ENCODE measurements at regions of chr4 and their contacts with region 1.

Region 1: GRCh38 chr4:62170235-62170634 is 970.1 kb downstream of the ADGRL3 start:
- DNase-seq: no peak
- H3K4me3 ChIP-seq: no peak overlapping the region
- H3K27ac ChIP-seq: no peak overlapping the region
- H3K4me1 ChIP-seq: no peaks in the 10 kb centered on the region
- H3K27me3 ChIP-seq: no peaks in the 10 kb centered on the region
- CTCF ChIP-seq: no peak
- POLR2A ChIP-seq: no peak

Region 2: DNA sequence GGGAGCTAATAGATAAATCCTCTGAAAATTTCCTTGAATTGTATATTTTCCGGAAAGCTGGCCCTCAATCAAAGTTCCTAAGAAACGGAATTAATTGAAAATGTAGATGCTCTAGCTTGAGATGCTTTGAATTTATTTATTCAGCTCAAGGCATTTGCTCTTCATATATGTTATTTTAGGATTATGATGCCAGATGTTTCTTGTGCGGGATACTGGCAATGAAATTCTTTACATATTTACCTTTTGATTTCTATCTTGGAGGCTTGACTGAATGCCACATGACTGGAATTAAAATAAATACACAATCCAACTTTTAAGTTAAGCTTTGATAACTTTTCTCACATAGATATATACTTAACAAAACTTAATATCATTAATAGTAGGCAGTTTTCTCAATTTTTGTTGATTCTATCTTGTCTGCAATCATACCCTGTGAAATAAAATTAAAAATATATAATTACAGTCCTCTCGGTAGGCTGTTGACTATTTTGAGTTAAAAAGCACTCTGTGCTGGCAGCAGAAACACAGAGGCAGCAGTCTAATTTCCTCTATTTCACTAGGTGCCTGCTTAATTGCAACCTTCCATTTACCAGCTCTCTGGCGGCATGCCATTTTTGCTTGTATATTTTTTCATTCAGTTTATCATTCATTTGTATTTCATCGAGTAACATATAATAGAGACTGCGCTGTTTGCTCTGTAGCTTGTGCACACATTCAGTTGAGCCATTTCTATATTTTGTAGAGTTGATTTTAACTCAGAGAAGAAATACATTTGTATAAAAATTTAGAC is 21.4 kb after region 1 on chr4:
- intact Hi-C with region 1: no loop called
- DNase-seq: no peak
- H3K4me3 ChIP-seq: no peak overlapping the region
- H3K27ac ChIP-seq: no peak overlapping the region
- H3K4me1 ChIP-seq: no peaks in the 10 kb centered on the region
- H3K27me3 ChIP-seq: no peaks in the 10 kb centered on the region
- CTCF ChIP-seq: no peak
- POLR2A ChIP-seq: no peak

Region 3: GRCh38 chr4:62250100-62250499 is 79.9 kb after region 1 on chr4:
- intact Hi-C with region 1: loop called (anchors 5 kb)
- DNase-seq: no peak
- H3K4me3 ChIP-seq: no peak overlapping the region
- H3K27ac ChIP-seq: no peak overlapping the region
- H3K4me1 ChIP-seq: no peaks in the 10 kb centered on the region
- H3K27me3 ChIP-seq: no peaks in the 10 kb centered on the region
- CTCF ChIP-seq: no peak
- POLR2A ChIP-seq: no peak